ENCODE measurements at regions of chr7 and their contacts with region 1.

Region 1: DNA sequence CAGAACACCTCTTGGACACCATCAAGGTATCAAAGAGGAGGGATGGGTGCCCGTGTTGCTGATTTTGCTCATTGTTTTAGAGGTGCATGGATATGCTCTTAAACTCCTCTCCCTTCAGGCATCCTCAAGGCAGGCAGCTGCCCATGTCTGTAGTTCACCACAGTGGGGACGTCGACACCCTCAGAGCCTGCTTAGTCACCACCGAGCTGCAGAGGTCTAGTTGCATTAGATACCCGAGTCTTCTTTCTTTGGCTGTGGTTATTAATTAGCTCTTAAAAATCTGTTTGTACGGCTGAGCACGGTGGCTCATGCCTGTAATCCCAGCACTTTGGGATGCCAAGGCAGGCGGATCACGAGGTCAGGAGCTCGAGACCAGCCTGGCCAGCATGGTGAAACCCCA is 24.7 kb upstream of the TSPAN13 start:
- DNase-seq: no peak
- ATAC-seq: no peak
- H3K4me3 ChIP-seq: no peak overlapping the region
- H3K27ac ChIP-seq: no peak overlapping the region
- H3K4me1 ChIP-seq: no peaks in the 10 kb centered on the region
- H3K27me3 ChIP-seq: no peaks in the 10 kb centered on the region
- CTCF ChIP-seq: no peak
- POLR2A ChIP-seq: no peak
- RAD21 ChIP-seq: no peak

Region 2: DNA sequence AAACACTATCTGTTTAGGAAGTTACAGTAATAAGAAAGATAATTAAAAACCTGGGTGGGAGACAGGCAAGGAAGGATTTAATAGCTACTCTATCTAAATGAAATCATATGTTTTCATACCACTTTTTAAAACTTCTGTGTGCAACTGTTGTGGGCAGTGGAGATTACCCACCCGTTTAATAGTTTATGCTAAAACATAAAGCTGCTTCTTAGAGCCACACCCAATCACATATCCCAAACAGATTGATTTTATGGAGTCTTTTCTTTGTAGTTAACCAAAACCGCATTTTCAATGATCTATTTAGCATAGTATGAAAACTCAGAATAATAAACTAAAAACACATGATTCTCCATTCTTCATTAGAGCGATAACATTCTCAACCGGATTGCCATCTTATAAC is 1471.1 kb before region 1 on chr7:
- CTCF ChIA-PET with region 1: no interaction called
- POLR2A ChIA-PET with region 1: no interaction called
- dilution Hi-C with region 1: no loop called
- in situ Hi-C with region 1: no loop called
- intact Hi-C with region 1: loop called (anchors 5 kb)
- DNase-seq: no peak
- ATAC-seq: no peak
- H3K4me3 ChIP-seq: no peak overlapping the region
- H3K27ac ChIP-seq: no peak overlapping the region
- H3K4me1 ChIP-seq: no peaks in the 10 kb centered on the region
- H3K27me3 ChIP-seq: no peaks in the 10 kb centered on the region
- CTCF ChIP-seq: no peak
- POLR2A ChIP-seq: no peak
- RAD21 ChIP-seq: no peak

Region 3: DNA sequence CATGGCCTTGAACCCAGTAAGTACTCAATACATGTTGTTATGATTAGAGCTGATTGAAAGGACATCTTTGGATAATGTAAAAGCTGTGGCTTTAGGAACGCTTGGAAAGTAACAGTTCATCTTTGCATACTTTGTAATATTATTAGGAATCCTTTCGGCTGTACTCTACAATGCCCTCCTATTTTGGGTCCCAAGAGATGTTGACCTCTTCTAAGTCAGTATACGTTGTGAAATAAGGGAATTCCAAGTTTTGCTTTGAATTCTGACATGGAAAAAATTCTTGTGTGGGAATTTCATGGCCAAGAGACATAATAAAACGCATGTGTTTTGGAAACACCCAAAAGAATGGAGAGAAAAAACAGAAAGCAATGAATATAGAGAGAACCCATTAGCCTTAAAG is 145.3 kb after region 1 on chr7:
- CTCF ChIA-PET with region 1: no interaction called
- POLR2A ChIA-PET with region 1: no interaction called
- dilution Hi-C with region 1: no loop called
- in situ Hi-C with region 1: no loop called
- intact Hi-C with region 1: no loop called
- DNase-seq: no peak
- ATAC-seq: no peak
- H3K4me3 ChIP-seq: no peak overlapping the region
- H3K27ac ChIP-seq: no peak overlapping the region
- H3K4me1 ChIP-seq: no peaks in the 10 kb centered on the region
- H3K27me3 ChIP-seq: no peaks in the 10 kb centered on the region
- CTCF ChIP-seq: no peak
- POLR2A ChIP-seq: no peak
- RAD21 ChIP-seq: no peak

Measured in IMR-90 (cell line).